ENCODE measurements at regions of chr22 and their contacts with region 1.

Region 1: GRCh38 chr22:38927033-38927781 is 30.2 kb upstream of the APOBEC3A start:
- DNase-seq: peak; percentile 77 to 85
- ATAC-seq: peak; percentile 79 to 86 (median 84)
- H3K4me3 ChIP-seq: peak overlapping the region; percentile 59
- H3K27ac ChIP-seq: peak overlapping the region; percentile 48
- H3K4me1 ChIP-seq: peaks cover 13% of the 10 kb centered on the region
- H3K27me3 ChIP-seq: peaks cover 0 to 4% (median 0%) of the 10 kb centered on the region in 3 donors
- CTCF ChIP-seq: peak; percentile 63

Region 2: GRCh38 chr22:38740754-38741153 is 186.5 kb before region 1 on chr22:
- intact Hi-C with region 1: no loop called
- DNase-seq: peak in 1 of 2 donors; percentile 44
- ATAC-seq: no peak
- H3K4me3 ChIP-seq: no peak overlapping the region
- H3K27ac ChIP-seq: no peak overlapping the region
- H3K4me1 ChIP-seq: peaks cover 14% of the 10 kb centered on the region
- H3K27me3 ChIP-seq: no peaks in the 10 kb centered on the region
- CTCF ChIP-seq: no peak

Region 3: DNA sequence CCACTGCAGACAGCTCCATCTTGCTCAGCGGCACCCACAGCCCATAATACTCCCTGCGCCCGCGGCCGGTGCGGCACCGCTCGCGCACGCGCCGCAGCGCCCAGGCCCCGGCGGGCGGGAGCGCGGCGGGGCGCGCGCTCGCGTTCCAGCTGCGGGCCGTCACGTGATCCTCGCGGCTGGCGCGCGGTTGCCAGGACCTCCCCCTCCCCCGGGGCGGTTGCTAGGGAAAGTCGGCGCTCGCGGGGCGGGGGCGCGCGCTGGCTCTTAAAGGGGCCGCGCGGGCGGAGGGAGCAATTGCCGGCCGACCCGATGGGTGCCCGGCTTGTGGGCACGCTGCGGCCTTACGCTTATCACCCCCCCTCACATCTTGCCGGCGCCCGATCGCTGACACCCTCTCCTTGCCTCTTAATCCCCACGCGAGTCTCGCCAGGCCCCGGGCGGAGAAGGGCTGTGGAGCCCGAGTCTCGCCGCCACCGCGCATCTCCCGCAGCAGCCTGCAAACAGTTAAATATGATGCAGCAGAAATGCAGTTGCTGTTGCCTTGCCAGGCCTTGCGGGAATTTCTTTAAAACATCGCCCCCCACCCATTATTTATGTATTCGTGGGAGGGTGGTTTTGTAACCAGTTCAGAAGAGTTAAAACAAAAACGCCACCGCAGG is 54.9 kb before region 1 on chr22 and contains the start of gene CBX6:
- intact Hi-C with region 1: loop called (anchors 5 kb)
- DNase-seq: peak; percentile 98
- ATAC-seq: peak; percentile 88 to 91 (median 90)
- H3K4me3 ChIP-seq: peak within 1 kb of the TSS; percentile 97
- H3K27ac ChIP-seq: peak within 1 kb of the TSS; percentile 94
- H3K4me1 ChIP-seq: peaks cover 20% of the 10 kb centered on the region
- H3K27me3 ChIP-seq: no peaks in the 10 kb centered on the region
- CTCF ChIP-seq: no peak
- total RNA-seq, gene CBX6: 15.1 to 21.0 (median 17.4) TPM

Region 4: DNA sequence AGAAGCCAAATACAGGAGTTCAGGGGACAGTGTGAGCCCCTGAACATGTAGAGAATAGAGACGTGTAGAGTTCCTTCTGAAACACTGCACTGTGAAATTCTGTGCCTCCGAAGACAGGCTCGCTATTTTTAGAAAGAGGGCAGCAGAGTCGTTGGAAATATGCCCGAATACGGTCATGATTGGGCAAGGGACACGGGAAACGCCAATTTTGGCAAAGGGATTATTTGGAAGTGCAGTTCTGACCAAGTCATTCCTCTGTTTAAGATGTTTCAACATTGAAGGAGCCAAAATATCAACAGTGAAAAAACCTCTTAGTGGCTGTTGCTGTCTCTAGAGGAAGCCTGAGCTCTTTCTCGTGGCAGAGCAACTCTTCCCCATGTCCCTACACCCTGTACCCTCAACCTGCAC is 45.7 kb before region 1 on chr22:
- intact Hi-C with region 1: loop called in 1 of 2 experiments (anchors 5 kb)
- DNase-seq: peak; percentile 54 to 68
- ATAC-seq: peak; percentile 75 to 92 (median 81)
- H3K4me3 ChIP-seq: peak overlapping the region; percentile 41
- H3K27ac ChIP-seq: peak overlapping the region; percentile 75
- H3K4me1 ChIP-seq: peaks cover 13% of the 10 kb centered on the region
- H3K27me3 ChIP-seq: no peaks in the 10 kb centered on the region
- CTCF ChIP-seq: no peak